ENCODE measurements at regions of chr3 and their contacts with region 1.

Region 1: DNA sequence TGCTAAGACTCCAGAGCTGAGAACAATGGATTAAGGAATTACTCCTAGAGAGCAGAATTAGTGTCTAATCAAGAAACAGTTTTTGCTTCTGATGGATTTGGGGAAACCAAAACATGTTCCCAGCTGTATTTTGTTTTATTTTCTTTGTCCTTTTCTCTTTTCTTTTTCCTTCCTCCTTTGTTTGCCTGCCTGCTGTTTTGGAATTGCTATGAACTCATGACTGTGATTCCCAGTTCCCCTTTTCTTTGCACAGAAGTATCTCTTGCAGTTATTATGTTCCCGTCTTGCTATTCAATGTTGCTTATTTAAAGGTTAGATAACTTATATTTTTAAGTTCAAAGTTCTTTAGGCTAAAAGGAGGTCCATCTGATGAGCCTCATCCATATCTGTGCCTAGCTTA is 77.0 kb upstream of the GBE1 start:
- DNase-seq: no peak

Region 2: DNA sequence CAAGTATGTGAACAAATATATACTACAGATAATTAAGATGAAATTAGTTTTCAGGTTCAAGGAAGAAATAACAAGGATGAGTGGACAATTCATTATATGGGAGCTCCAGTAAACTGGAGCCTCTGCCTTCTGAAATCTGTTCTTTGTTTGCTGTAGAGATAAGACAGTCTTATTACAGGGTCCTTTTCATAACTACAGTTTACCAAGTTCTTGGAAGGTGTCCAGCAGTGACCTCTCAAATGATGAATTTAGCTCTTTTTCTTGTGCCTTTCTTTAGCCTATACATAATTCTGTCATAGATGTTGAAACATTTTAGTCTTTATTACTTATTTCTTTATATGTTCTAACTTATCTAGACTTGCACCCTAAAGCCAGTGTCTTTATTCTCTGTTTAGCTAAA is 12.7 kb after region 1 on chr3:
- intact Hi-C with region 1: loop called in 1 of 2 experiments (anchors 1 kb)
- DNase-seq: no peak

Region 3: DNA sequence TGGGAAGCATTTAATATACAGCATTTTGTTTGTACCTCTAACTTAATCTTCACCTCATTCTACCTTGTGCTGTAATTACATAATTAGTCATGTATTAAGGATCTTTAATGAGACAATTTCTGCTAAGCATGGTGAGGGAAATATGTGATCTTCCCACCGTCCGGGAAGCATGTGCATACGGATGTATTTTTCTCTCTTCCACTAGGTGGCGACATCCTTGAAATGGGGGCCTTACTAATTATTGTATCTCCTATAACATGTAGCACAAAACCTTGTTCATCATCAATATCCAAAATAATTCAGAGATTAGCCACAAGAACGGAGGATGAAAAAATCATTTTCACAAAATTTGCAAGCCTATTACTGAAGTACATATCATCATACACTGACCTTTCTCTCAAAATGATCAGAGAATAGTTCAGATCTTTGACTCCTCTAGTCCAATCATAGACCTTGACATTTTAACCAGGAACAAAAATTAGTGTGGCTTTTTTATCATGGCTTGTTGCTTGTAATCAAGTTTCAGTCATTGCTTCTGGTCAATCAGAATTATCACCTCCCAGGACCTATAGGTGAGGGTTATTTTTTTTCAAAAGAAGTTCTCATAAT is 71.9 kb after region 1 on chr3:
- intact Hi-C with region 1: no loop called
- DNase-seq: no peak

Region 4: GRCh38 chr3:82012775-82013174 is 174.3 kb after region 1 on chr3:
- intact Hi-C with region 1: no loop called
- DNase-seq: no peak

Measured in posterior vena cava (tissue), 2 donors.